ENCODE measurements at regions of chr18 and their contacts with region 1.

Region 1: DNA sequence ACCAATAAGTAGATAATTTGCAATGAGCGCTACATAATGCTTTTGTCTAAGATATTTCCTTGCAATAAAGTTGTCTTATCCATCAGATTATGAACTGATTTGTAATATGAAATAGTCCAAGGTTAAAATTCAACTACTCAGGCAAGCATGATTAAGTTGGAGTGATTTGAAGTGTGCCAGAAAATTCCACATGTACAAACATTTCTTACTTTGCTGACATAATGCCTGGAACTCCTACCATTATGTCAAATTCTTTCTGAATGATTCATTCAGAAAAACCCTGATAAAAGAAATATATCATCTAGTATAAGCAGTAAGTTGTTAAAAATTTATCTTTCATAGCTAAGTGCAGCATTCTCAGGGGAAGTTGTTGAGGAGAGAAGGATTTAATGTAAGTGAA is 87.3 kb downstream of the CBLN2 start:
- DNase-seq: no peak
- H3K4me3 ChIP-seq: no peak overlapping the region
- H3K27ac ChIP-seq: no peak overlapping the region
- H3K4me1 ChIP-seq: no peaks in the 10 kb centered on the region
- H3K27me3 ChIP-seq: no peaks in the 10 kb centered on the region
- CTCF ChIP-seq: no peak
- EP300 ChIP-seq: no peak
- POLR2A ChIP-seq: no peak

Region 2: GRCh38 chr18:72470391-72470790 is 13.6 kb after region 1 on chr18:
- intact Hi-C with region 1: loop called (anchors 1 kb)
- DNase-seq: no peak
- H3K4me3 ChIP-seq: no peak overlapping the region
- H3K27ac ChIP-seq: no peak overlapping the region
- H3K4me1 ChIP-seq: no peaks in the 10 kb centered on the region
- H3K27me3 ChIP-seq: no peaks in the 10 kb centered on the region
- CTCF ChIP-seq: no peak
- EP300 ChIP-seq: no peak
- POLR2A ChIP-seq: no peak

Measured in esophagus muscularis mucosa (tissue), 4 donors.